MCF 10A (cell line): ENCODE measurements at regions of chr11 and their contacts with region 1.

Region 1: GRCh38 chr11:126355324-126355925 is at the start of gene ST3GAL4:
- DNase-seq: peak; percentile 74
- H3K4me3 Mint-ChIP-seq: peak within 1 kb of the TSS; percentile 85
- H3K27ac Mint-ChIP-seq: peak within 1 kb of the TSS; percentile 73
- H3K4me1 Mint-ChIP-seq: peaks cover 44% of the 10 kb centered on the region
- H3K27me3 Mint-ChIP-seq: no peaks in the 10 kb centered on the region
- CTCF ChIP-seq: no peak
- total RNA-seq, gene ST3GAL4: 12.3 and 15.3 TPM in 2 replicates

Region 2: DNA sequence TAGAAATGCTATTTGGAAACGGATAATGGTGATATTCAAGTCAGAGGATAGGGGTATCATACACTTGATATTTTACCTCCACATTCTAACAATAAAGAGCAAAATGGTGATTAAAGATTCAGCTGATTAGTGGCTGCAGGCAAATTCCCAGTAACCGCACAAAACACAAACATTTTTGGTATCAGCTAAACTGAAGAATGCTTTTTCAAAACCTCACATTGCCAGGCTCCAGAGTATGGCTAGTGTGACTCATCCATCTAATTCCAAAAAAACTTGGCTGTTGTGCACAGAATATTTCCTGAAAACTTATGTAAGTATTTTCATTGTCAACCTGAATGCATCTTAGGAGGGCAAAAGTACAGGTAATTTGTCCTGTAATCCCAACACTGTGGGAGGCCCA is 97.7 kb before region 1 on chr11:
- CTCF ChIA-PET with region 1: no interaction called
- POLR2A ChIA-PET with region 1: no interaction called
- intact Hi-C with region 1: no loop called
- DNase-seq: peak; percentile 26
- H3K4me3 Mint-ChIP-seq: no peak overlapping the region
- H3K27ac Mint-ChIP-seq: no peak overlapping the region
- H3K4me1 Mint-ChIP-seq: peaks cover 5% of the 10 kb centered on the region
- H3K27me3 Mint-ChIP-seq: no peaks in the 10 kb centered on the region
- CTCF ChIP-seq: no peak

Region 3: DNA sequence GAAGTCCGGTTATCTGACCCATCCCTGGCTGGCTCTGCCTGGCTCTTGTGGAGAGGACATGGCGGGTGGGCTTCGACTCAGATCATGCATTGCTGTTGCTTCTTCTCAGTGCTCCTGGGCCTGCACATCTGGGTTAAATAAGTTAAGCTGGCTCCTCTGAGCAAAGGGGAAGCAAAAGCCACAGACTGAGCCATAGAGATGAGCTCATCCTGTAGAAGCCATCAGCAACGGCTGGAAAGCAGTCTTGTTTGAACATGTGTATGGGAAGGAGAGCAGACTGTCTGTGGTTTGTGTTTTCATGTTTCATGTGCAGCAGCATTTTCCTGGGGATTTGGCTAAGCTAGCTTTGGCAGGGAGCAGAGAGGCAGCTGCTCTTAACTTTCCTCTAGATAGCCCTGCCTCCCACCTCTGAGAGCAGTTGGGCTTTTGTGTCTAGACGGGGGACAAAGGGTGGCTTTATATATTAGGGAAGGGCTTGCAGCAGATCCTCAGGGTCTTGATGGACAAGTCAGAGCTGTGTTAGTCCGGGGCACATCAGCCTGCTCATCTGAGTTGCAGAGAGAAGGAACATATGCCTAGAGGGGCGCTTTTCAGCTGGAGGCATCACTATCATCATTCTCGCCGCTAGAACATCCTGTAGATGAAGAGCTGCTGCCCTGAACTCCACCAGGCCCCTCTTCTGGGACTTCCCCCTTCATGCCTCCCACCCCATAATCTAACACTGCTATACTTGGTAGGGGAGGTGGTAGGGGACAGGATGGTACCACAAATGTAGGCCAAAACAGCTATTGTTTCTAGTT is 36.7 kb before region 1 on chr11:
- CTCF ChIA-PET with region 1: interaction called, 6 read pairs
- POLR2A ChIA-PET with region 1: interaction called, 6 read pairs
- intact Hi-C with region 1: loop called (anchors 2 kb)
- DNase-seq: peak; percentile 74
- H3K4me3 Mint-ChIP-seq: peak overlapping the region; percentile 59
- H3K27ac Mint-ChIP-seq: peak overlapping the region; percentile 84
- H3K4me1 Mint-ChIP-seq: peaks cover 33% of the 10 kb centered on the region
- H3K27me3 Mint-ChIP-seq: no peaks in the 10 kb centered on the region
- CTCF ChIP-seq: no peak

Region 4: DNA sequence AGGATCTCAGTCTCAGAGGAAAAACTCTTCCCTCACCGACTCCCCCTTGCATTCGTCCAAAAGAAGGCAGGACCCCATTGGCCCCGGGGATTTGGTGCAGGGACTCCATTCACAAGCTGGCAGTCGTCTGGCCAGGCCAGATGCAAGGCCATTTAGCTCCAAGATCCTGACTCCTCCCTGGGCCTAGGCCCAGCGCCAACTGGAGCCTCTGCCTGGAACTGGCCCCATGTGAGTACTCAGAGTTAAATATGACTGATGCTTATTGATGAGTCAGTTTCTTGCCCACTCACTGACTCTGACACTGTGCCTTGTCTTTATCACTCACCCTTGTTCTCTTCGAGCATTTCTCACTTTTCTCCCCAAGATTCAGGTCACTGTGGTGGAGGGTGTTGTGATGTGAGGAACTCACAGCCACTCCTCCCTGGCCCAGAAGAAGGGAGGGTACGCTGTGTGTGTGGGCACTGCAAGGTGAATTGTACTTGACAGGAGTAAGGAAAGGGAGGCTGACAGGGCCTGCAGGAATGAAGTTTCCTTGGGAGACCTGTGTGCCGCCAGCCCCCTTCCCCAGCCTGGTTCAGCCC is 23.2 kb before region 1 on chr11:
- CTCF ChIA-PET with region 1: no interaction called
- POLR2A ChIA-PET with region 1: interaction called, 3 read pairs
- intact Hi-C with region 1: loop called (anchors 2 kb)
- DNase-seq: peak; percentile 94
- H3K4me3 Mint-ChIP-seq: no peak overlapping the region
- H3K27ac Mint-ChIP-seq: peak overlapping the region; percentile 21
- H3K4me1 Mint-ChIP-seq: peaks cover 21% of the 10 kb centered on the region
- H3K27me3 Mint-ChIP-seq: no peaks in the 10 kb centered on the region
- CTCF ChIP-seq: no peak

Region 5: DNA sequence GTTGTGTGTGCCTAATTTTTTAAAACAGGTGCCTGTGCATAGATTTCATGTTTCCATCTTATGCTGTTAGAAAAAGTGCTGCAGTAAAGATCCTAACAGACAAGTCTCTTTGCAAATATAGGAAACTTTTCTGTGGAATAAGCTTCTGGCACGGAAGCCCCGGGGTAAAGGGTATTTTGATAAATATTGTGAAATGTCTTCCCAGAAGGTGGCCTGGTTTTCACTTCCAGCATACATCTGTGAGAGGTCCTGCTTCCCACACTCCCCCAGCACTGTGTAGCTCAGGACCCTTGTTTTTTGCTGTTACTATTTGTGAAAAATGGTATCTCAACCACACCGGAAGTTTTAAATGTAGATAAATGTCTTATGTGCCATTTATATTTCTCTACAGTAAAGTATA is 14.6 kb after region 1 on chr11:
- CTCF ChIA-PET with region 1: interaction called, 3 read pairs
- POLR2A ChIA-PET with region 1: interaction called, 11 read pairs
- intact Hi-C with region 1: no loop called
- DNase-seq: no peak
- H3K4me3 Mint-ChIP-seq: no peak overlapping the region
- H3K27ac Mint-ChIP-seq: no peak overlapping the region
- H3K4me1 Mint-ChIP-seq: peaks cover 35% of the 10 kb centered on the region
- H3K27me3 Mint-ChIP-seq: no peaks in the 10 kb centered on the region
- CTCF ChIP-seq: no peak

Region 6: DNA sequence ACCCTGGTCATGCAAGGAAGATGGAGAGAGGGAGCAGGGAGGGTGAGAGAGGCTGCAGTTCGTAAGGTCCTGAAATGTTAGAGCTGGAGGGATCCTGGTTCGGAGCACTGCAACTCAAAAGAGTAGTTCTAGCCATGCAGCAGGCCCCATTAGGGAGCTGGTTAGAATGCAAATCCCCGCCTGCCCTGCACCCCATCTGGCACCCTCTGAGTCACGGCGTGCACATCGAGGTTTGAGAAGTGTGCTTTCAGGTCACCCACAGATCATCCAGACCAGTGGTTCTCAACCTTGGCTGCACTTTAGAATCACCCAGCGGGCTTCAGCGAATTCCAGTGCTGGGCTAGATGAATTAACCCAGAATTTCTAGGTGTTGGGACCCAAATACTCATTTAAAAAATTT is 48.2 kb after region 1 on chr11:
- CTCF ChIA-PET with region 1: interaction called, 4 read pairs
- POLR2A ChIA-PET with region 1: interaction called, 23 read pairs
- intact Hi-C with region 1: loop called (anchors 5 kb)
- DNase-seq: peak; percentile 68
- H3K4me3 Mint-ChIP-seq: peak overlapping the region; percentile 8
- H3K27ac Mint-ChIP-seq: peak overlapping the region; percentile 65
- H3K4me1 Mint-ChIP-seq: peaks cover 33% of the 10 kb centered on the region
- H3K27me3 Mint-ChIP-seq: no peaks in the 10 kb centered on the region
- CTCF ChIP-seq: no peak

Region 7: GRCh38 chr11:126431401-126432064 is 76.1 kb after region 1 on chr11:
- CTCF ChIA-PET with region 1: no interaction called
- POLR2A ChIA-PET with region 1: no interaction called
- intact Hi-C with region 1: loop called (anchors 10 kb)
- DNase-seq: peak; percentile 79
- H3K4me3 Mint-ChIP-seq: no peak overlapping the region
- H3K27ac Mint-ChIP-seq: peak overlapping the region; percentile 98
- H3K4me1 Mint-ChIP-seq: peaks cover 14% of the 10 kb centered on the region
- H3K27me3 Mint-ChIP-seq: no peaks in the 10 kb centered on the region
- CTCF ChIP-seq: no peak